ENCODE measurements at regions of chr3 and their contacts with region 1.

Region 1: DNA sequence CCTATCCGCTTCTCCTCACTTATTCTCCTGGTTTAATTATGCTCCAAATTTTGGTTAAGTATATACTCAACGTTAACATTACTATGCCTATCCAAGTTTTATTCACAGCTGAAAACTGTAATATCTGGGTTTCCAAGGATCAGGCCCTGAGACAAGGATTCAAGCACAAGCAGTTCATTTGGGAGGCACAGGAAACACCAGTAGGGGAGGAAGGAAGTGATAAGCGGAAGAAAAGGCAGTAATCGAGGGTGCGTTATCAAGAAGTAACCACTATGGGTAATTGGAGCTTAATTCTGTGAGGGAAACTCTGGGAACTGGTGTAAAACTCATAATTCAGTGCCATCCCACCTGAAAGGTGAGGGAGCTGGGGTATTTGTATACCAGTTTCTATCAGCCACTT is 120.3 kb downstream of the KCNAB1 start:
- DNase-seq: no peak
- ATAC-seq: no peak
- H3K4me3 ChIP-seq: no peak overlapping the region
- H3K27ac ChIP-seq: no peak overlapping the region
- H3K4me1 ChIP-seq: no peaks in the 10 kb centered on the region
- H3K27me3 ChIP-seq: no peaks in the 10 kb centered on the region
- CTCF ChIP-seq: no peak
- POLR2A ChIP-seq: no peak
- RAD21 ChIP-seq: no peak

Region 2: GRCh38 chr3:156271995-156272719 is 31.5 kb after region 1 on chr3:
- CTCF ChIA-PET with region 1: no interaction called
- POLR2A ChIA-PET with region 1: no interaction called
- RAD21 ChIA-PET with region 1: no interaction called
- intact Hi-C with region 1: loop called (anchors 2 kb)
- DNase-seq: no peak
- ATAC-seq: no peak
- H3K4me3 ChIP-seq: no peak overlapping the region
- H3K27ac ChIP-seq: no peak overlapping the region
- H3K4me1 ChIP-seq: no peaks in the 10 kb centered on the region
- H3K27me3 ChIP-seq: no peaks in the 10 kb centered on the region
- CTCF ChIP-seq: no peak
- POLR2A ChIP-seq: no peak
- RAD21 ChIP-seq: no peak